ENCODE measurements at regions of chr22 and their contacts with region 1.

Region 1: DNA sequence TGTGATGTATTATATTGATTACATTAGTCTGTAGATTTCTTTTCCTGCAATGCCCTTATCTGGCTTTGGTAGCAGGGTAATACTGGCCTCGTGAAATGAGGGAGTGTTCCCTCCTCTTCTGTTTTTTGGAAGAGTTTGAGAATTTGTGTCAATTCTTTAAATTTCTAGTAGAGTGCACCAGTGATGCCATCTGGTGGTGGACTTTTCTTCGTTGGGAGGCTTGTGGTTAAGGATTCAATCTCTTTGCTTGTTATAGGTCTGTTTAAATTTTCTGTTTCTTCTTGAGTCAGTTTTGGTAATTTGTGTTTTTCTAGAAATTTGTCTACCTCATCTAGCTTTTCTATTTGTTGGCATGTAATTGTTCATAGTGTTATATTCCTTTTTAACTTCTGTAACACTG is 18.9 kb downstream of the SHANK3 start:
- DNase-seq: peak; percentile 33
- ATAC-seq: no peak
- H3K4me3 ChIP-seq: no peak overlapping the region
- H3K27ac ChIP-seq: no peak overlapping the region
- H3K4me1 ChIP-seq: peaks cover 16% of the 10 kb centered on the region
- H3K27me3 ChIP-seq: no peaks in the 10 kb centered on the region
- CTCF ChIP-seq: peak; percentile 76
- EP300 ChIP-seq: no peak
- POLR2A ChIP-seq: no peak
- RAD21 ChIP-seq: peak; percentile 78

Region 2: GRCh38 chr22:50576070-50576469 is 115.5 kb before region 1 on chr22:
- CTCF ChIA-PET with region 1: interaction called, 30 read pairs
- POLR2A ChIA-PET with region 1: no interaction called
- in situ Hi-C with region 1: loop called (anchors 5 kb)
- intact Hi-C with region 1: loop called (anchors 1 kb)
- DNase-seq: peak; percentile 81
- ATAC-seq: peak; percentile 83
- H3K4me3 ChIP-seq: no peak overlapping the region
- H3K27ac ChIP-seq: no peak overlapping the region
- H3K4me1 ChIP-seq: peaks cover 2% of the 10 kb centered on the region
- H3K27me3 ChIP-seq: no peaks in the 10 kb centered on the region
- CTCF ChIP-seq: peak; percentile 81
- EP300 ChIP-seq: no peak
- POLR2A ChIP-seq: no peak
- RAD21 ChIP-seq: peak; percentile 94

Region 3: DNA sequence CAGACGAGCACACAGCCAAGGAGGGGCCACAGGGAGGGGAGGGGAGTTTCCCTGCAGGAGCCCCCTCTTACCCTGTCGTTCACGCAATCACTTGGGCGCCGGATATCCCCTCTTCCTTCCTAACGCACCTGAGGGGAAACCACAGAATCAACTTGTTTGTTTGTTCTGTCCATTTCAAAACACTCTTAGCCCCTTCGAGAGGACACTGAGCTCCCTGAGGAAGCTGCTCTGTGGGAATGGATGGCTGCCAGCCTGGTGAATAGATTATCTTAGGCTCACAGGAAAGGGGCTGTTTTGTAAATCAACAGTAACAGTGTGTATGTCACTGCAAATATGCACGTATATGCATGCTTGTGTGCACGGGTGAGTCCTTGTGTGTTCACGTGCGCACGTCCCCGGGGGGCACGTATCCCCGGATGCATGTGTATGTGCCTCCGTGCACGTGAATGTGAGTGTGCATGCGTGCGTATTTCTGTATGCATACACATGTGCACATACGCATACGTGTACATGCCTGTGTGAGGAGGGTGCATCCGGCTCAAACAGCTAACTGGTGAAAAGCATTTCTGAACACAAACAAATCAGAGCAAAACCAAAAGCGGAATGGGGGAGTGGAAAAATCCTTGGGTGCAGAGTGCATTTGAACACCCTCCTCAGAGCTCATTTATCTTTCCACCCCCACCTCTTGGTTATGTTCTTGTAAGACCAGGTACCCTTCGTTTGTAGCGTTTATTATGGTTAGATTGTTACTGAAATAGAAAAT is 70.7 kb before region 1 on chr22:
- CTCF ChIA-PET with region 1: interaction called, 12 read pairs
- POLR2A ChIA-PET with region 1: no interaction called
- in situ Hi-C with region 1: loop called (anchors 5 kb)
- intact Hi-C with region 1: no loop called
- DNase-seq: peak; percentile 25
- ATAC-seq: peak; percentile 67
- H3K4me3 ChIP-seq: peak overlapping the region; percentile 46 to 61 (median 47)
- H3K27ac ChIP-seq: no peak overlapping the region
- H3K4me1 ChIP-seq: peaks cover 54% of the 10 kb centered on the region
- H3K27me3 ChIP-seq: no peaks in the 10 kb centered on the region
- CTCF ChIP-seq: peak; percentile 82
- EP300 ChIP-seq: no peak
- POLR2A ChIP-seq: no peak
- RAD21 ChIP-seq: no peak

Region 4: DNA sequence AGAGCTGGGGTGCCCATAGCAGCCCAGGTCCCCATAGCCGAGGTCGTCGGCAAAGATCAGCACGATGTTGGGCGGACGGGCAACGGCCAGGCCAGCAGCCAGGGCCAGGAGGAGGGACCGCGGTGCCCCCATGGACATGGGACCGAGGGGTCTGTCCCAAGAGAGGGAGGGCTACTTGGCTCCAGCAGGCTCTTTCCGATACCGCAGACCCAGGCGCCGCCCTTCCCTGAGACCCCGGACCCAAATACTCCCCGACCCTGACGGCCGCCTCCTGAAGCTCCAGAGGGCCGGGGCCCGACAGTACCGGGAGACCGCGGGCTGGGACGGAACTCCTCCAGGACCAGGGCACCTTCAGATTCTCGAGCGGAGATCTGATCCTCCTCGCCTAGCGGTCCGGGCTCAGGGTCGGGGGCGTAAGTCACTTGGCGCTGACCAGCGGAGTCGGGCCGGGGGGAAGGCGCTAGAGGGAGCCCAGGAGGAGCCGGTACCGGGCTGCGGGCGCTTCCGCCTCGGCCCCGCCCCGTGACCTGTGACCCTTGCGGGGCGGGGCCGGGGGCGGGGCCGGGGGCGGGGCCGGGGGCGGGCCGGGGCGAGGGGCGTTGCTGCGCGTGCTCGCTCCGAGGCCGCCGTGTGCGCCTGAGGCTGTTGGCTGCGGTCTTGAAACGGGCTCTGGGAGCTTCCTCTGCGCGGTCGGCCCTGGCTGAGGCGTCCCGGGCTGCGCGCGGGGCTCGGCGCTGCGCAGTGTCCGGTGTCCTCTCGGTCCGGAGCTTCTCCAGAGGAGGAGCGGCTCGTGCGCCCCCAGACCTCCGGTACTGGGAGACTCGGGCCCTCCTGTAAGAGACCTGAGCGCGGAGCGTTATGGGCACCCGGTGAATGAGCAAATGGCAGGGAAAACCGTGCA is 63.6 kb before region 1 on chr22 and contains the start of gene ARSA:
- CTCF ChIA-PET with region 1: interaction called, 16 read pairs
- POLR2A ChIA-PET with region 1: no interaction called
- in situ Hi-C with region 1: loop called (anchors 5 kb)
- intact Hi-C with region 1: loop called (anchors 2 kb)
- DNase-seq: peak; percentile 70
- ATAC-seq: peak; percentile 89
- H3K4me3 ChIP-seq: peak within 1 kb of the TSS; percentile 68 to 88 (median 86)
- H3K27ac ChIP-seq: peak within 1 kb of the TSS; percentile 79
- H3K4me1 ChIP-seq: peaks cover 41% of the 10 kb centered on the region
- H3K27me3 ChIP-seq: no peaks in the 10 kb centered on the region; a peak in 1 of 5 replicates
- CTCF ChIP-seq: peak; percentile 81
- EP300 ChIP-seq: no peak
- POLR2A ChIP-seq: peak; percentile 79 to 92
- RAD21 ChIP-seq: peak; percentile 63
- total RNA-seq, gene ARSA: 3.8 and 9.0 TPM in 2 replicates

Measured in HepG2 (cell line).